Dorsolateral prefrontal cortex (tissue), 120 donors: ENCODE measurements at regions of chr21 and their contacts with region 1.

Region 1: GRCh38 chr21:43775795-43776430 is at the start of gene CSTB:
- DNase-seq: peak; percentile 79 to 93 (median 88)
- H3K4me3 ChIP-seq: peak within 1 kb of the TSS; percentile 71 to 99 (median 93)
- H3K27ac ChIP-seq: peak within 1 kb of the TSS; percentile 81 to 98 (median 94)
- H3K27me3 ChIP-seq: no peaks in the 10 kb centered on the region
- CTCF ChIP-seq: peak in 6 of 56 donors; percentile 5 to 21 (median 13)
- total RNA-seq, gene CSTB: 21.2 to 46.5 (median 30.9) TPM

Region 2: GRCh38 chr21:43611598-43612369 is 164.1 kb before region 1 on chr21:
- intact Hi-C with region 1: no loop called
- DNase-seq: peak in 5 of 10 donors; percentile 9 to 54 (median 47)
- H3K4me3 ChIP-seq: no peak overlapping the region
- H3K27ac ChIP-seq: peak overlapping the region in 2 of 59 donors; percentile 13 to 33
- H3K27me3 ChIP-seq: no peaks in the 10 kb centered on the region
- CTCF ChIP-seq: peak; percentile 24 to 69 (median 58)

Region 3: GRCh38 chr21:43733529-43734071 is 42.3 kb before region 1 on chr21:
- intact Hi-C with region 1: loop called (anchors 5 kb)
- DNase-seq: peak in 4 of 10 donors; percentile 56 to 80 (median 66)
- H3K4me3 ChIP-seq: peak overlapping the region in 28 of 59 donors; percentile 1 to 44 (median 22)
- H3K27ac ChIP-seq: peak overlapping the region in 57 of 59 donors; percentile 29 to 99 (median 84)
- H3K27me3 ChIP-seq: no peaks in the 10 kb centered on the region
- CTCF ChIP-seq: no peak

Region 4: GRCh38 chr21:43739621-43740435 is 36.1 kb before region 1 on chr21:
- intact Hi-C with region 1: loop called in 1 of 2 experiments (anchors 5 kb)
- DNase-seq: no peak
- H3K4me3 ChIP-seq: no peak overlapping the region
- H3K27ac ChIP-seq: peak overlapping the region in 51 of 59 donors; percentile 4 to 93 (median 63)
- H3K27me3 ChIP-seq: no peaks in the 10 kb centered on the region
- CTCF ChIP-seq: no peak

Region 5: GRCh38 chr21:44011980-44012527 is 236.1 kb after region 1 on chr21 and contains the start of gene TRAPPC10:
- intact Hi-C with region 1: no loop called
- DNase-seq: peak; percentile 61 to 92 (median 80)
- H3K4me3 ChIP-seq: peak within 1 kb of the TSS; percentile 71 to 98 (median 90)
- H3K27ac ChIP-seq: peak within 1 kb of the TSS; percentile 85 to 99 (median 97)
- H3K27me3 ChIP-seq: no peaks in the 10 kb centered on the region
- CTCF ChIP-seq: peak in 4 of 56 donors; percentile 4 to 23 (median 14)
- total RNA-seq, gene TRAPPC10: 49.1 to 103 (median 69.3) TPM